Naive thymus-derived CD4-positive, alpha-beta T cell (primary cell): ENCODE measurements at regions of chr16 and their contacts with region 1.

Region 1: DNA sequence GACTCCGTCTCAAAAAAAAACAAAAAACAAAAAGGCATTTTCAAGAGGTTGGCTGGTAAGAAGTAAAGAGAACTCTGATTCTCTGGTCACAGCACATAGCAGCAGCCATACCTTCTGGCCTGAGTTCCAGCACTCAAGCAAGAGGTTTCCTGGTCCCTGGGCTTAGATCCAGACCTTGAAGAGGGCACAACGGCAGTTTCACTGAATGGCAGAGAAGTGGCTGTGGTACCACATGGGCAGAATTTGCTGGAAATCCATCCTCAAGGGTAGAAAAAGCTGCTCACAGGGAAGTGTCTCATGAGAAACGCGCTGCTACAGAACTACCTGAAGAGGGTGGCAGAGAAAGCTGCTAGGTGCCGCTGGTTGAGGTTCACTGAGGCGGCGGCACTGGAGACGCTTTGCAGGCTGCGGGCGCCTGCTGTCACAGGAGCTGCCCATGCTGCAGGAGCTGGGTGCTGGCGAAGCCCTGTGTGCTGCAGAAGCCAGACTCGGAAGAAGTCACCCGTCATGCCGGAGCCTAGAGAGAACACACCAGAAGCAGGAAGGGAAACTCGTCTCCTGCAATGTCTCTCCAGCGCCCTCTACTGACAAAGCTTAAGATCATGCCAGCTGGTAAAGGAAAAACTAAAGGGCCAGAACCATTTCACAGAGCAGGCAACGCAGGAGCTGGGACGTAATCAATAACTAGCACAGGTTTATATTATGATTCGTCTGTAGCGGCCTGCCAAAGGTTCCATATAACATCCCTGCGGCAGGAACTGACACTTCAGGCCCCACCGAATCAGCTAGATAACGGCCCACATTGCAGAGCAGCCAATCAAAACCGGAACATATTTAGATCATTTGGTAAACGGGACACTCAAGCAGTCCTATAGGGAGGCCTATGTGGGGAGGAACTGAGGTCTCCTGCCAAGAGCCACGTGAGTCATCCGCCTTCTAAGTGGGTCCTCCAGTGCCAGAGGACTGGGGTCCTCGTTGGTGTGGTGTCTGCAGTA is 5.4 kb upstream of the ZNF213 start:
- DNase-seq: peak; percentile 53 to 92 (median 88)
- ATAC-seq: peak; percentile 91
- H3K4me3 ChIP-seq: peak overlapping the region; percentile 69
- H3K4me3 Mint-ChIP-seq: peak overlapping the region; percentile 73 to 97 (median 93)
- H3K27ac ChIP-seq: peak overlapping the region; percentile 72
- H3K27ac Mint-ChIP-seq: peak overlapping the region; percentile 38 to 96 (median 85)
- H3K4me1 ChIP-seq: peaks cover 27 to 36% of the 10 kb centered on the region in 2 donors
- H3K4me1 Mint-ChIP-seq: peaks cover 22 to 67% (median 55%) of the 10 kb centered on the region in 7 donors
- H3K27me3 ChIP-seq: no peaks in the 10 kb centered on the region
- H3K27me3 Mint-ChIP-seq: no peaks in the 10 kb centered on the region

Region 2: DNA sequence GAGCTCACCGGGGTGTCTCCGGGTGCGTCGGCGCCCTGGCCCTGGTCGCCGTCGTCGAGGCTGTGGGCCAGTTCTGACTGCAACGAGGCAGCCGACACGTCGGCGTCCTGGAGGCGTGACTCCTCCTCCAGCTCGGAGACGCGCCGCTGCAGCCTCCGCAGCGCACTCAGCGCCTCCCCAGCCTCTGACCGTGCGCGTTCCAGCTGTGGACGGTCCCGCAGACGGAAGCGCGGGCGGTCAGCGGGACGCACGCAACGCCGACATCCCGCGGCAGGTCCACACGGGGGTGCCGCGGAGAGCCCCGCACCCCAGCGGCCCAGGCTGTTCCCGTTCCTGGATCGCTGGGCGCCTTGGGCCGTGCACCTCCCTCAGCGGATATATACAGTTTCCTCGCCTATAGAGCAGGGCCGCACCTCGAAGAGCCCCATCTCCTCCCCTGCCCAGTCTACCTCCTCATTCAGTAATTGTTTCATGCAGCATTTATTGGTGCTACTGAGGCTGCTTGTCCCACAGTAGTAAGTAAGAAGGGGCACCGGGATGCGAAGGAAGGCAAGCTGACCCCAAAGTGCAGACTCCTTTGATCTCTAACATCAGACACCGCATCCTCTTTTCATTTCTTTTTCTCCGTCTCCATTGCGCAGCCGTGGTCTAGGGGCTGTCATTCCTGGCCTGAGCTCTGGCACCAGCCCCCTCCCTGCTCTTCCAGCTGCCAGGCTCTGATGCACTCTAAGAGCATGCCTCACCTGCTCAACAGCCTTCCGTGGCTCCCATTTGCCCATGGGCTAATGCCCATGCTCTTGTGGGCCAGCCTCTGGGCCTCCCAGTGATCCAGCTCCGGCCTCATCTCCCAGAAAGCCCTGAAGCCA is 99.7 kb before region 1 on chr16:
- CTCF ChIA-PET with region 1: interaction called, 98 read pairs
- POLR2A ChIA-PET with region 1: interaction called, 8 read pairs
- intact Hi-C with region 1: loop called in 1 of 2 experiments (anchors 1 kb)
- DNase-seq: peak in 1 of 9 donors; percentile 68
- ATAC-seq: peak; percentile 17
- H3K4me3 ChIP-seq: peak overlapping the region; percentile 43
- H3K4me3 Mint-ChIP-seq: peak overlapping the region; percentile 50 to 82 (median 70)
- H3K27ac ChIP-seq: no peak overlapping the region
- H3K27ac Mint-ChIP-seq: peak overlapping the region in 3 of 9 donors; percentile 26 to 60 (median 40)
- H3K4me1 ChIP-seq: peaks cover 18% of the 10 kb centered on the region in 2 donors
- H3K4me1 Mint-ChIP-seq: peaks cover 15 to 35% (median 25%) of the 10 kb centered on the region in 7 donors
- H3K27me3 ChIP-seq: peaks cover 6 to 9% of the 10 kb centered on the region in 2 donors
- H3K27me3 Mint-ChIP-seq: peaks cover 33 to 49% (median 37%) of the 10 kb centered on the region in 5 donors

Region 3: DNA sequence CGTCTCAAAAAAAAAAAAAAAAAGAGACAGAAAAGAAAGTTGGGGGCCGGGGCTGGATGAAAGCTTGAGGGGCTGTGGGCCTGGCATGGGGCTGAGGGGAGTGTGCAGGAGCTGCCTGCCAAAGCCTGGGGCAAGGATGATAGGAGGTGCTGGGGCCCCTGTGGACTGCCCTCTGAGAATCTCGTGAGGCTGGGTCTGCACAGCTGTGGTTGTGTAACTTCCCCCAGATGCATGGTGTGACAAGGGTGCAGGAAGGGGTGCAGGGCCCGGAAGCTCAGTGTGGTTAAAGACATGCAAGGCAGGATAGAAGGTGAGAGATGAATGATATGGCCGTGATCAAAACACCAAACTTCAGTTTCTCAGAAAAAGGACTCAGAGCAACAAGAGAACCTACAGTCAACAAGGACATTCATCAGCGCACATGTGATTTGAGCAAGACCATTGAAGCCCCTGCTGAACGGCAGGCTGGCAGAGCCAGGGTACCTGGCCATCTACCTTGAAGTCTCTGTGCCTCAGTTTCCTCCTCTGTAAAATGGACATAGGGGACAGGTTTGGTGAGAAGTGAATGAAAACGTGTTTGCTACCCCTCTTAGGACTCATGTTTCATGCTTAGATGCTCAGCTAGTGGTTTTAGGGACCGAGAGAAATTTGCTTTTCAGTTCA is 54.4 kb before region 1 on chr16:
- CTCF ChIA-PET with region 1: interaction called, 18 read pairs
- POLR2A ChIA-PET with region 1: interaction called, 12 read pairs
- intact Hi-C with region 1: loop called (anchors 1 kb)
- DNase-seq: peak; percentile 44 to 92 (median 90)
- ATAC-seq: peak; percentile 95
- H3K4me3 ChIP-seq: peak overlapping the region; percentile 37
- H3K4me3 Mint-ChIP-seq: peak overlapping the region; percentile 69 to 89 (median 83)
- H3K27ac ChIP-seq: peak overlapping the region; percentile 78
- H3K27ac Mint-ChIP-seq: peak overlapping the region; percentile 92 to 99 (median 99)
- H3K4me1 ChIP-seq: peaks cover 73 to 82% of the 10 kb centered on the region in 2 donors
- H3K4me1 Mint-ChIP-seq: peaks cover 67 to 93% (median 78%) of the 10 kb centered on the region in 7 donors
- H3K27me3 ChIP-seq: no peaks in the 10 kb centered on the region
- H3K27me3 Mint-ChIP-seq: no peaks in the 10 kb centered on the region

Region 4: GRCh38 chr16:3094289-3095027 is 35.0 kb before region 1 on chr16:
- CTCF ChIA-PET with region 1: interaction called, 233 read pairs
- POLR2A ChIA-PET with region 1: interaction called, 40 read pairs
- intact Hi-C with region 1: loop called (anchors 1 kb)
- DNase-seq: peak in 8 of 9 donors; percentile 32 to 62 (median 54)
- ATAC-seq: peak; percentile 59
- H3K4me3 ChIP-seq: no peak overlapping the region
- H3K4me3 Mint-ChIP-seq: peak overlapping the region in 4 of 10 donors; percentile 27 to 63 (median 45)
- H3K27ac ChIP-seq: no peak overlapping the region
- H3K27ac Mint-ChIP-seq: peak overlapping the region; percentile 0 to 90 (median 72)
- H3K4me1 ChIP-seq: peaks cover 23 to 30% of the 10 kb centered on the region in 2 donors
- H3K4me1 Mint-ChIP-seq: peaks cover 9 to 57% (median 43%) of the 10 kb centered on the region in 7 donors
- H3K27me3 ChIP-seq: no peaks in the 10 kb centered on the region
- H3K27me3 Mint-ChIP-seq: no peaks in the 10 kb centered on the region

Region 5: GRCh38 chr16:3106205-3106928 is 23.1 kb before region 1 on chr16:
- CTCF ChIA-PET with region 1: interaction called, 233 read pairs
- POLR2A ChIA-PET with region 1: interaction called, 40 read pairs
- intact Hi-C with region 1: loop called (anchors 1 kb)
- DNase-seq: peak; percentile 77 to 92 (median 85)
- ATAC-seq: peak; percentile 97
- H3K4me3 ChIP-seq: peak overlapping the region; percentile 76
- H3K4me3 Mint-ChIP-seq: peak overlapping the region; percentile 83 to 94 (median 87)
- H3K27ac ChIP-seq: peak overlapping the region; percentile 89
- H3K27ac Mint-ChIP-seq: peak overlapping the region; percentile 82 to 96 (median 92)
- H3K4me1 ChIP-seq: peaks cover 13 to 23% of the 10 kb centered on the region in 2 donors
- H3K4me1 Mint-ChIP-seq: peaks cover 26 to 45% (median 35%) of the 10 kb centered on the region in 7 donors
- H3K27me3 ChIP-seq: no peaks in the 10 kb centered on the region
- H3K27me3 Mint-ChIP-seq: peaks cover 0 to 7% (median 0%) of the 10 kb centered on the region in 5 donors

Region 6: DNA sequence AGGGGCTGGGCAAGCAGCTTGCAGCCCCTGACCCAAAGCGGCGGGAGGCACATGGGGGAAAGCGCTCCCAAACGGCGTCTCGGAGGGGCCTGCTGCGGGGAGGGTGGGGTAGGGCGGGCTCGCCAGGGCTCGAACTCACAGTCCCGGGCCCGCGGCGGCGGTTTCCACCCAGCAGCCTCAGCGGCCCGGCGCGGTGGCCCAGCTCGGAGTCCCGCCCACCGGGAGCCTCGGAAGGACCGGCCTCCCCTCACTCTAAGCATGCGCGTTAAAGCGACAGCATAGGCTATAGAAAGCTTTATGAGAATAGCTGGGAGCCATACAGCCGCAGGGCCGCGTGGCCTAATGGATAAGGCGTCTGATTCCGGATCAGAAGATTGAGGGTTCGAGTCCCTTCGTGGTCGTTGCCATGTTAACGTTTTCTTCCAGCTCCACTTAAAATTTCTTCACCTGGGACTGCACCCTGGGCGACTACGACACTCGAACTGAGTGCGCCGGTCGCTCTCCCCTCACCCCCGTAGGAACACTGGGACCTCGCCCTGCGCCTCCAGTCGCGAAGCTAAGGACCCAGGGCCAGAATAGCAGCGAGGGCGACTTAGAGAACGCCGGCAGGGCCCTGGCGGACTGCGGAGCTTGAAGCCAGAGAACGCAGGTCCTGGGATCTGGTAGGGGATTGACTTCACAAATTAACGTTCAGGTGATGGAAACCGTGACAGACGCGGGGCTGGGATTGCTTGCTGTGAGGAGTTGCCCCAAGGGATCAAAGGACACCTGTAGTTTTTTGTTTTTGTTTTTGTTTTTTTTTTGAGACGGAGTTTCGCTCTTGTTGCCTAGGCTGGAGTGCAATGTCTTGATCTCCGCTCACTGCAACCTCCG is 21.1 kb after region 1 on chr16:
- CTCF ChIA-PET with region 1: interaction called, 9 read pairs
- POLR2A ChIA-PET with region 1: interaction called, 95 read pairs
- intact Hi-C with region 1: loop called (anchors 1 kb)
- DNase-seq: peak; percentile 90 to 100 (median 97)
- ATAC-seq: peak; percentile 90
- H3K4me3 ChIP-seq: peak overlapping the region; percentile 73
- H3K4me3 Mint-ChIP-seq: peak overlapping the region; percentile 83 to 93 (median 90)
- H3K27ac ChIP-seq: peak overlapping the region; percentile 71
- H3K27ac Mint-ChIP-seq: peak overlapping the region; percentile 85 to 98 (median 94)
- H3K4me1 ChIP-seq: peaks cover 0 to 5% of the 10 kb centered on the region in 2 donors
- H3K4me1 Mint-ChIP-seq: peaks cover 11 to 42% (median 22%) of the 10 kb centered on the region in 7 donors
- H3K27me3 ChIP-seq: no peaks in the 10 kb centered on the region
- H3K27me3 Mint-ChIP-seq: peaks cover 0 to 25% (median 0%) of the 10 kb centered on the region in 5 donors

Region 7: GRCh38 chr16:3173892-3174617 is 44.6 kb after region 1 on chr16:
- CTCF ChIA-PET with region 1: interaction called, 14 read pairs
- POLR2A ChIA-PET with region 1: interaction called, 12 read pairs
- intact Hi-C with region 1: no loop called
- DNase-seq: no peak
- ATAC-seq: peak; percentile 13
- H3K4me3 ChIP-seq: no peak overlapping the region
- H3K4me3 Mint-ChIP-seq: peak overlapping the region in 9 of 10 donors; percentile 22 to 70 (median 54)
- H3K27ac ChIP-seq: no peak overlapping the region
- H3K27ac Mint-ChIP-seq: peak overlapping the region in 5 of 9 donors; percentile 2 to 71 (median 18)
- H3K4me1 ChIP-seq: peaks cover 29 to 39% of the 10 kb centered on the region in 2 donors
- H3K4me1 Mint-ChIP-seq: peaks cover 21 to 42% (median 34%) of the 10 kb centered on the region in 7 donors
- H3K27me3 ChIP-seq: peaks cover 3 to 37% of the 10 kb centered on the region in 2 donors
- H3K27me3 Mint-ChIP-seq: peaks cover 46 to 81% (median 53%) of the 10 kb centered on the region in 5 donors